GM12878 (cell line): ENCODE measurements at regions of chr18 and their contacts with region 1.

Region 1: DNA sequence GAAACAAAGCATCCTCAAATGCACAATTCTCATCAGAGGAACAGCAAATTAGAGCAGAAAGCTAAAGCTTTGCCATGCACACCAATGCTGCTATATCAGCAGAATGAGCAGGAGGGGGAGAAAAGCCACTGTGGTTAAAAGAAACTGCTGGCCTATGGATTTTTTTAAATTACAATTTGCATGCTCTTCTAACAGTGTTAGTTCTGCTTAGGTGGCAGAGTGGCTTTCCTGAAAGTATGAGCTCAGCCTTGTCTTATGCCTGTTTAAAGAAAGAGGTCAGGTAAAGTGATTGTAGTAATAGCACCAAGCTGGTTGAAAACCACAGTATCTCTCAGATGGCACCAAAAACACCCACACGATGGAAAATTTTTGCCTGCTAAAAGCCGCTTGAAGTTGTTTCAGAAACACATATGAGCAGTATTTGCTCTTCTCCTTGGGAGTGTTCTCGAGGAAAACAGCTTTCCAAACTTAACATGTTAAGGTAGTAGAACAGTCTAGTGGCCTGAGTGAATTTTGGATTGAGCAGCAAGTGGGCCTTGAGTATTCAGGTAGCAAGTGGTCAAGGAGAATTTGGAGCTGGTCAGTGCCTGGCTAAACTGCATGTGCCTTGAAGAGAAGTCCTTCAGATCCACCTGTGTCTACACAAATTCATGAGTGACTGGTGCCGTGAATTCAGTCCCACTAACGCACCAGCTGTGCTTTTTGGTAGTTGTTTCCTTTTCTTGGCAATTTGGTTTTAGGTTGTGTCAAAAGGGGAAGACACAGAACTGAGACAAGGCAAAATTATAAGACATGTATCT is 19.6 kb upstream of the NDUFV2 start:
- DNase-seq: peak; percentile 68
- ATAC-seq: peak; percentile 98
- H3K4me3 ChIP-seq: peak overlapping the region; percentile 43
- H3K27ac ChIP-seq: peak overlapping the region; percentile 54
- H3K4me1 ChIP-seq: peaks cover 11% of the 10 kb centered on the region; the same call in 1 of the 2 replicates
- H3K27me3 ChIP-seq: no peaks in the 10 kb centered on the region
- CTCF ChIP-seq: no peak; a peak in 1 of 6 replicates
- EP300 ChIP-seq: peak; percentile 16 to 55; a peak in 2 of 4 replicates
- POLR2A ChIP-seq: no peak
- RAD21 ChIP-seq: peak; percentile 48

Region 2: DNA sequence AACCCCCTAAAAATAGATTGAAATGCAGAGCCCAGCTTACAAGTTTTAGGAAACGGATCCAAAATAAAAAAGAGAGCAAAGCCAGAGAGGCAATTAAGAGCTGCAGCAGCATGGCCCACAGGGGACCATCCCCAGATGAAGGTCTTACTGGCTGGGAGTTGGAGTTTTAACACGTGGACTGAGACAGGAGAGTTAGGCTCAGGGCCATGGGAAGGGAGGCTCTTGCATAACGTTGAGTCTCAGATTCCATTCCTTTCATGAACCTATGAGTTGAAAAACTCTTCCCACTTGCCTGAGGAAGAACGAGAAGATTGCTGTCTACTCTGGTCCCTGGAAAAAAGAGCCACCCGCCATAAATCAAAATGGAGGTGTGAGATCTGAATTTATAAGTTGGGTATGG is 82.2 kb before region 1 on chr18:
- CTCF ChIA-PET with region 1: no interaction called
- POLR2A ChIA-PET with region 1: no interaction called
- RAD21 ChIA-PET with region 1: no interaction called
- SMC1A ChIA-PET with region 1: no interaction called
- in situ Hi-C with region 1: no loop called
- intact Hi-C with region 1: no loop called
- DNase-seq: no peak
- ATAC-seq: no peak
- H3K4me3 ChIP-seq: no peak overlapping the region
- H3K27ac ChIP-seq: no peak overlapping the region
- H3K4me1 ChIP-seq: no peaks in the 10 kb centered on the region
- H3K27me3 ChIP-seq: no peaks in the 10 kb centered on the region; a peak in 1 of 4 replicates
- CTCF ChIP-seq: no peak
- EP300 ChIP-seq: no peak
- POLR2A ChIP-seq: no peak
- RAD21 ChIP-seq: no peak

Region 3: GRCh38 chr18:9095297-9096006 is 12.5 kb after region 1 on chr18:
- CTCF ChIA-PET with region 1: interaction called, 24 read pairs
- POLR2A ChIA-PET with region 1: interaction called, 11 read pairs
- RAD21 ChIA-PET with region 1: interaction called, 21 read pairs
- SMC1A ChIA-PET with region 1: interaction called, 59 read pairs
- in situ Hi-C with region 1: no loop called
- intact Hi-C with region 1: no loop called
- DNase-seq: peak; percentile 63
- ATAC-seq: peak; percentile 92
- H3K4me3 ChIP-seq: peak overlapping the region; percentile 24; the same call in 1 of the 2 replicates
- H3K27ac ChIP-seq: peak overlapping the region; percentile 95
- H3K4me1 ChIP-seq: peaks cover 19% of the 10 kb centered on the region
- H3K27me3 ChIP-seq: no peaks in the 10 kb centered on the region
- CTCF ChIP-seq: no peak
- EP300 ChIP-seq: peak; percentile 20 to 55; a peak in 3 of 4 replicates
- POLR2A ChIP-seq: peak; percentile 70
- RAD21 ChIP-seq: no peak

Region 4: GRCh38 chr18:9102508-9103375 is 19.8 kb after region 1 on chr18 and contains the start of gene NDUFV2:
- CTCF ChIA-PET with region 1: interaction called, 24 read pairs
- POLR2A ChIA-PET with region 1: interaction called, 9 read pairs
- RAD21 ChIA-PET with region 1: interaction called, 9 read pairs
- SMC1A ChIA-PET with region 1: interaction called, 59 read pairs
- in situ Hi-C with region 1: no loop called
- intact Hi-C with region 1: no loop called
- DNase-seq: peak; percentile 77
- ATAC-seq: peak; percentile 93
- H3K4me3 ChIP-seq: peak within 1 kb of the TSS; percentile 87
- H3K27ac ChIP-seq: peak within 1 kb of the TSS; percentile 85
- H3K4me1 ChIP-seq: peaks cover 5% of the 10 kb centered on the region
- H3K27me3 ChIP-seq: no peaks in the 10 kb centered on the region
- CTCF ChIP-seq: no peak
- EP300 ChIP-seq: no peak
- POLR2A ChIP-seq: peak; percentile 87
- RAD21 ChIP-seq: no peak
- polyA plus RNA-seq, gene NDUFV2: 409 to 471 TPM

Region 5: GRCh38 chr18:9109523-9109922 is 26.6 kb after region 1 on chr18:
- CTCF ChIA-PET with region 1: interaction called, 13 read pairs
- POLR2A ChIA-PET with region 1: interaction called, 8 read pairs
- RAD21 ChIA-PET with region 1: interaction called, 9 read pairs
- SMC1A ChIA-PET with region 1: interaction called, 18 read pairs
- in situ Hi-C with region 1: no loop called
- intact Hi-C with region 1: no loop called
- DNase-seq: no peak
- ATAC-seq: no peak
- H3K4me3 ChIP-seq: peak overlapping the region; percentile 44; the same call in 1 of the 2 replicates
- H3K27ac ChIP-seq: no peak overlapping the region; the same call in 1 of the 2 replicates
- H3K4me1 ChIP-seq: peaks cover 9% of the 10 kb centered on the region
- H3K27me3 ChIP-seq: no peaks in the 10 kb centered on the region
- CTCF ChIP-seq: no peak
- EP300 ChIP-seq: no peak
- POLR2A ChIP-seq: no peak
- RAD21 ChIP-seq: no peak

Region 6: DNA sequence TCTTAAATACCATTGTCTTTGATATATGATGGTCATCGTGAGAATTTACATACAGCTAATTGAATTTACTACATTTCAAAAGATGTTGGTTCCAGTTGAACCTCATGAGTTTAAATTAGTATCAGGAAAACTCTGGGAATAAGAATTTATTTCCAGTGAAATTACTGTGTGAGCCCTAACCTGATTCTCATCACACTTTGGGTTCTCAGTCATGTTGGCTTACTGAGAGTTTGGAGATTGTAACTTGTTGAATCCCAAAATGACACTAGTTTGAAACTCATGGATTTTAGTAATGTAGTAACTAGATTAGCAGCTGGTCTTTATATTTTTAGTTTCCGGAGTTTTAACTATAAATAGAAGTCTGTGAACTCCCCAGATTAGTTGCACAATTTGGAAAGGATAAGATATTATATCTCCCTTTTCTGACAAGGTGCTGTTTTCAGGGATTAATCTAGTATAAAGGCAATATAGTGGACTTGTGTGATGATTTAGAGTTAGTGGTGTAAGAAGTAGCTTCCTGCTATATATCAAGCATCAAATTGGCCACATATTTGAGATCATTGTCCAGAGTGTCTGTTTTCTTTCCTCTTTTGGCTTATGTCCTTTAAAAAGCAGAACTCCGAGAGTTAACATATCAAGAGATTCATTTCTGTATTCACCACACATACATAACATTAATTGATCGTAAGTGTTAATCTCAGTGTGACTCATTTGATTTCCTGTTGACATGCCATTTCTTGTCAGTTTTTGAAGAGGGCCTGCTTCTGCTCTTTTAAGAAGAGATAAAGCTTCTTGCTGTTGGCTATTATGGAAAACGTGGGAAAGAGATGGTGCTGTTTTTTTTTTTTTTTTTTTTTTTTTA is 35.3 kb after region 1 on chr18:
- CTCF ChIA-PET with region 1: interaction called, 3 read pairs
- POLR2A ChIA-PET with region 1: interaction called, 4 read pairs
- RAD21 ChIA-PET with region 1: interaction called, 10 read pairs
- SMC1A ChIA-PET with region 1: interaction called, 19 read pairs
- in situ Hi-C with region 1: no loop called
- intact Hi-C with region 1: no loop called
- DNase-seq: no peak
- ATAC-seq: peak; percentile 48
- H3K4me3 ChIP-seq: peak overlapping the region; percentile 25
- H3K27ac ChIP-seq: peak overlapping the region; percentile 89
- H3K4me1 ChIP-seq: peaks cover 38% of the 10 kb centered on the region
- H3K27me3 ChIP-seq: no peaks in the 10 kb centered on the region
- CTCF ChIP-seq: no peak
- EP300 ChIP-seq: peak in 1 of 2 experiments; percentile 54; a peak in 1 of 4 replicates
- POLR2A ChIP-seq: no peak
- RAD21 ChIP-seq: no peak